OCI-LY7 (cell line): ENCODE measurements at regions of chr2 and their contacts with region 1.

Region 1: DNA sequence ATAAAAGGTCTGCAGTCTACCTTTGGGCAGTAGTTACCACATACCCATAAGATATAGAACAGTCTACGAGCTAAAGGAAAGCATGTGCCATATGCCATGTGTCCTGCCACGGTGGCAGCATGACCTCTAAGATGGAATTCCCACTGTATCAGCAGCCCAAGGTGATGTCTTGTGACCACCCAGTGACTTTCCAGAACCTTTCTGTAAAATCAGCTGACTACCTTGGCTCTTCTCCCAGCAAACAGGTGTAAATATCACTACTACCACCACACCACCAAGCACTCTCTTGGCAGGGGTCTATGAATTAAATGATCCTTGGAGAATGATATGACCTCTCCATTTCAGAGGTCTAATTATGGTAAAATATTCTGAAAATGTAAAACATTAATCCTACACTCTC is 99.6 kb downstream of the METTL8 start:
- DNase-seq: no peak
- H3K4me3 ChIP-seq: no peak overlapping the region
- H3K27ac ChIP-seq: peak overlapping the region; percentile 26
- H3K4me1 ChIP-seq: peaks cover 77% of the 10 kb centered on the region
- CTCF ChIP-seq: no peak

Region 2: DNA sequence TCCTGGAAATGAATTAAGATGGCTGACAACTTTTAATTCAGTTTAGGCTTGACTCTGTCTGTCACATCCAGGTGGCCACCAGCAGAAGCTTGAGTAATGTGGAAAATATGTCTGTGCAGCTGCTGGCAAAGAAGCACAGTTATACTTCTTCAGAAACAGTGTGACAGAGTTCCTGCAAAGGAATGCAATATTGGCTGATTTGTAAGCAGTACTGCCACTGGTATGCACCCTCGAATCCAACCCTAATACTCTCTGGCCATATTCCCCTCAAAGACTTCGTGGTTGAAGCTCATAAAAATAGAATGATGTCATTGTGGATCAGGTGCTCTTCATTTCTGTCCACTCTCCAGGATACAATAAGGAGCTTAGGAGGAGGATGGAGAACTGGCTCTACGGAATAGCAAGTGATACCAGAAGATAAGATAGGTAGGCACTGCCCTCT is 13.4 kb after region 1 on chr2:
- CTCF ChIA-PET with region 1: no interaction called
- POLR2A ChIA-PET with region 1: interaction called, 16 read pairs
- intact Hi-C with region 1: no loop called
- DNase-seq: peak; percentile 67
- H3K4me3 ChIP-seq: no peak overlapping the region
- H3K27ac ChIP-seq: peak overlapping the region; percentile 48
- H3K4me1 ChIP-seq: peaks cover 56% of the 10 kb centered on the region
- CTCF ChIP-seq: no peak